ENCODE measurements at regions of chr1 and their contacts with region 1.

Region 1: DNA sequence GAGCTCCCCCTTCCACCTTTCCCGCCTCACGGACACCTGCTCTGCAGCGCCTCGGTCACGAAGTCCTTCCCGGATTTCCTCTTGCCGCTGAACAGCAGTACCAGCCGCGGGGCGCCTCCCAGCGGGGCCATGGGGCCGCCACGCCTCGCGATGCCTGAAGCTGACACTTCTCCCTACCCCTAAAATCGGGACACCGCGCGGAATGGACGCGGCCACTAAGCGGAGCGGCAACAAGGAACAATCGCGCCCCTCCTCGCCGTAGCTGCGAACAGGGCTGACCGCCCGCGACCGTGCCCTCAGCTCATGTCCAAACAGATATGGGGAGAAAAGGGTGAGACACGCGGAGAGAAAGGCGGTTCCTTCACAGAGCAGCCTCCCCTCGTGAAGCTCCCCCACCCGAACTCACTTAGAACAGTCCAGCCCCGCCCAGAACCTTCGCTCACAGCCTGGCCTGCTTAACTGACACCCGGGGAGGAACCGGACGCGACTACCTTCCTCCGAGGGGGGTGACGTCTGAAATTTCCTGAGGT is at the start of gene PMVK:
- DNase-seq: peak; percentile 84 to 98
- H3K4me3 ChIP-seq: peak within 1 kb of the TSS; percentile 73 to 75
- H3K27ac ChIP-seq: peak within 1 kb of the TSS; percentile 97 to 98
- H3K4me1 ChIP-seq: peaks cover 0 to 13% of the 10 kb centered on the region in 2 donors
- H3K27me3 ChIP-seq: no peaks in the 10 kb centered on the region
- CTCF ChIP-seq: peak in 2 of 3 experiments; percentile 26 to 42
- total RNA-seq, gene PMVK: 9.6 TPM

Region 2: GRCh38 chr1:154627257-154628120 is 309.1 kb before region 1 on chr1:
- intact Hi-C with region 1: loop called (anchors 5 kb)
- DNase-seq: peak; percentile 41 to 94
- H3K4me3 ChIP-seq: peak overlapping the region; percentile 85 to 98
- H3K27ac ChIP-seq: peak overlapping the region; percentile 95 to 97
- H3K4me1 ChIP-seq: peaks cover 0 to 9% of the 10 kb centered on the region in 2 donors
- H3K27me3 ChIP-seq: no peaks in the 10 kb centered on the region
- CTCF ChIP-seq: no peak

Region 3: DNA sequence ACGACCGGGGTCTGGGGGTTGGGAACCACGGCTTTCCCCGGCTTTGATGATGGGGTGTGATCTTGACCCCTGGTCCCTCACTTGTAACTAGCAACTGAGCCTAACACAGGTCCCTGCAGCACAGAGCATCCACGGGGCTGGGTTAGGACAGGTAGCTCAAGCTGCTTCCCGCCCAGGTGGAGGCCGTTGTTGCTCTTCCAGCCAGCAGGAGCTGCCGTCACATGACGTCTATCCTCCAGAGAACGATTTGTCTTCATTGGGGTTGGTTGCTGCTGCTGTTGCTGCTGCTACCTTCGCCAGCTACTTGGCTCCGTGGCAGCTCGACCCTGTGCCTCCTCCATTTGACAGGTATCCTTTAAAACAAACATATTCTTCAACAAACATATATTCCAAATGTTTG is 254.4 kb before region 1 on chr1:
- intact Hi-C with region 1: no loop called
- DNase-seq: no peak
- H3K4me3 ChIP-seq: no peak overlapping the region
- H3K27ac ChIP-seq: no peak overlapping the region
- H3K4me1 ChIP-seq: no peaks in the 10 kb centered on the region
- H3K27me3 ChIP-seq: no peaks in the 10 kb centered on the region
- CTCF ChIP-seq: no peak

Region 4: GRCh38 chr1:154870115-154870571 is 66.5 kb before region 1 on chr1 and contains the start of gene KCNN3:
- intact Hi-C with region 1: loop called (anchors 1 kb)
- DNase-seq: peak; percentile 72 to 96
- H3K4me3 ChIP-seq: peak within 1 kb of the TSS; percentile 35 to 64
- H3K27ac ChIP-seq: no peak within 1 kb of the TSS
- H3K4me1 ChIP-seq: peaks cover 0 to 23% of the 10 kb centered on the region in 2 donors
- H3K27me3 ChIP-seq: no peaks in the 10 kb centered on the region
- CTCF ChIP-seq: no peak
- total RNA-seq, gene KCNN3: 24.6 TPM

Region 5: GRCh38 chr1:154884869-154885701 is 51.5 kb before region 1 on chr1:
- intact Hi-C with region 1: no loop called
- DNase-seq: peak in 1 of 2 donors; percentile 13
- H3K4me3 ChIP-seq: no peak overlapping the region
- H3K27ac ChIP-seq: no peak overlapping the region
- H3K4me1 ChIP-seq: no peaks in the 10 kb centered on the region
- H3K27me3 ChIP-seq: no peaks in the 10 kb centered on the region
- CTCF ChIP-seq: no peak

Region 6: GRCh38 chr1:154955718-154956543 is 19.3 kb after region 1 on chr1 and contains the start of gene PBXIP1:
- intact Hi-C with region 1: loop called (anchors 1 kb)
- DNase-seq: peak; percentile 52 to 93
- H3K4me3 ChIP-seq: peak within 1 kb of the TSS; percentile 68 to 70
- H3K27ac ChIP-seq: peak within 1 kb of the TSS; percentile 65 to 83
- H3K4me1 ChIP-seq: peaks cover 18 to 47% of the 10 kb centered on the region in 2 donors
- H3K27me3 ChIP-seq: no peaks in the 10 kb centered on the region
- CTCF ChIP-seq: peak in 2 of 3 experiments; percentile 15 to 26
- total RNA-seq, gene PBXIP1: 70.0 TPM

Region 7: GRCh38 chr1:154974063-154974807 is 37.6 kb after region 1 on chr1 and contains the start of gene CKS1B:
- intact Hi-C with region 1: loop called (anchors 1 kb)
- DNase-seq: peak; percentile 97 to 99
- H3K4me3 ChIP-seq: peak within 1 kb of the TSS; percentile 61 to 82
- H3K27ac ChIP-seq: peak within 1 kb of the TSS; percentile 95 to 99
- H3K4me1 ChIP-seq: peaks cover 22 to 33% of the 10 kb centered on the region in 2 donors
- H3K27me3 ChIP-seq: no peaks in the 10 kb centered on the region
- CTCF ChIP-seq: no peak
- total RNA-seq, gene CKS1B: 40.4 TPM

Region 8: GRCh38 chr1:155017041-155017945 is 80.7 kb after region 1 on chr1:
- intact Hi-C with region 1: loop called (anchors 1 kb)
- DNase-seq: peak; percentile 68 to 96
- H3K4me3 ChIP-seq: peak overlapping the region; percentile 42 to 59
- H3K27ac ChIP-seq: peak overlapping the region; percentile 82 to 89
- H3K4me1 ChIP-seq: peaks cover 7 to 15% of the 10 kb centered on the region in 2 donors
- H3K27me3 ChIP-seq: no peaks in the 10 kb centered on the region
- CTCF ChIP-seq: peak; percentile 99 to 100 (median 99)

Region 9: GRCh38 chr1:155135415-155136028 is 198.9 kb after region 1 on chr1 and contains the start of gene SLC50A1:
- intact Hi-C with region 1: loop called (anchors 5 kb)
- DNase-seq: peak; percentile 78 to 98
- H3K4me3 ChIP-seq: peak within 1 kb of the TSS; percentile 76 to 80
- H3K27ac ChIP-seq: peak within 1 kb of the TSS; percentile 97 to 100
- H3K4me1 ChIP-seq: peaks cover 9 to 25% of the 10 kb centered on the region in 2 donors
- H3K27me3 ChIP-seq: no peaks in the 10 kb centered on the region
- CTCF ChIP-seq: peak; percentile 26 to 72 (median 39)
- total RNA-seq, gene SLC50A1: 9.4 TPM

Region 10: DNA sequence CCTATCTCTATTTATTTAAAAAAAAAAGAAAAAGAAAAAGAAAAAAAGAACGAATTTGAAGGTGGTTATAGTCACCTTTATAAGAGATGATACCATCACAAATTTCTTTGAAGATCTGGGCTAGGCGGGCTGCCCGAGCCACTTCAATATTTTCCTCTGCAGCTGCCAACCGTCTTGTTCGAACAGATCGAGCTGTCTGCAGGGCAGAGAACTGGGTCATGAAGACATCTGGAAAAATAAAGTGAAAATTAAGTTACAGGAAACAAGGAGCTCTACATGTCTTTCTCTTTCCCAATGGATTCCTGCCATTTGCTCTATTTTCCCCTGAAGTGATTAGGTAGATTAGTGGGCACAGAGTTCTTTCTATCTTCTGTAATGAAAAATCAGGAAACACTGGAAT is 416.0 kb after region 1 on chr1:
- intact Hi-C with region 1: no loop called
- DNase-seq: no peak
- H3K4me3 ChIP-seq: no peak overlapping the region
- H3K27ac ChIP-seq: no peak overlapping the region
- H3K4me1 ChIP-seq: no peaks in the 10 kb centered on the region
- H3K27me3 ChIP-seq: no peaks in the 10 kb centered on the region
- CTCF ChIP-seq: no peak

Measured in ascending aorta (tissue), 2 donors.